ENCODE measurements at regions of chr5 and their contacts with region 1.

Region 1: DNA sequence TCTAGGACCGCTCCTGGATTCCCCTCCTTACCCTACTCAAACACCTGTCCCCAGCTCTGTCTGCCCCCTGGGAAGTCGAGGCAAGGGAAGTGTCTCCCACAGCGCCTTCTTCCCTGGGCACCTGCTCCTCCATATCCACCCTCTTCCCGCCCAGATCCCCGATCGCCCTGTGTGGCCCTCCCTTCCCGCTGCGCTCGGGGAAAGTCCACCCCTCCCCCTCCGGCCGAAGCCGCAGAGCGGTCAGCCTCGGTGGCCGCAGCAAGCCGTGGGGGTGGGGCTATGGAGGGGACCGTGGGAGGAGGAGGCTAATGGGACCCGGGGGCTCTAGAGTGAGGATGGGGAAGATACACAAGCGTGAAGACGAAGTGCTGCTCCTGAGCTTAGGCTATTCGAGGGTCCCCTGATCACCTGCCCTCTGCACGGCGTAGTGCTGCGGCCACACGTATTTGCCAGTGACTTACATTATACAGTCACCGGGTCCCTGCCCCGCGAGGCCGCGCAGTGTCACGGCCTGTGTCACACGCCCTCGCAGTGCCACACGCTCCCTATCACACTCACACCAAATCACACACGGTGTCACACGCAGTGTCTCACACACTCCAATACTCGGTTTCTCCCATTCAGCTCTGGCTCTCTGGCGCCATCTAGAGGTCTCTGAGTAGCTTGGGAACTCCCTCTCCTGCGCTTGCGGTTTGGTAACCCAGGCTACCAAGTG is 658 bp upstream of the PCDH1 start:
- DNase-seq: peak; percentile 78
- H3K27ac ChIP-seq: peak overlapping the region; percentile 67
- CTCF ChIP-seq: peak; percentile 99

Region 2: DNA sequence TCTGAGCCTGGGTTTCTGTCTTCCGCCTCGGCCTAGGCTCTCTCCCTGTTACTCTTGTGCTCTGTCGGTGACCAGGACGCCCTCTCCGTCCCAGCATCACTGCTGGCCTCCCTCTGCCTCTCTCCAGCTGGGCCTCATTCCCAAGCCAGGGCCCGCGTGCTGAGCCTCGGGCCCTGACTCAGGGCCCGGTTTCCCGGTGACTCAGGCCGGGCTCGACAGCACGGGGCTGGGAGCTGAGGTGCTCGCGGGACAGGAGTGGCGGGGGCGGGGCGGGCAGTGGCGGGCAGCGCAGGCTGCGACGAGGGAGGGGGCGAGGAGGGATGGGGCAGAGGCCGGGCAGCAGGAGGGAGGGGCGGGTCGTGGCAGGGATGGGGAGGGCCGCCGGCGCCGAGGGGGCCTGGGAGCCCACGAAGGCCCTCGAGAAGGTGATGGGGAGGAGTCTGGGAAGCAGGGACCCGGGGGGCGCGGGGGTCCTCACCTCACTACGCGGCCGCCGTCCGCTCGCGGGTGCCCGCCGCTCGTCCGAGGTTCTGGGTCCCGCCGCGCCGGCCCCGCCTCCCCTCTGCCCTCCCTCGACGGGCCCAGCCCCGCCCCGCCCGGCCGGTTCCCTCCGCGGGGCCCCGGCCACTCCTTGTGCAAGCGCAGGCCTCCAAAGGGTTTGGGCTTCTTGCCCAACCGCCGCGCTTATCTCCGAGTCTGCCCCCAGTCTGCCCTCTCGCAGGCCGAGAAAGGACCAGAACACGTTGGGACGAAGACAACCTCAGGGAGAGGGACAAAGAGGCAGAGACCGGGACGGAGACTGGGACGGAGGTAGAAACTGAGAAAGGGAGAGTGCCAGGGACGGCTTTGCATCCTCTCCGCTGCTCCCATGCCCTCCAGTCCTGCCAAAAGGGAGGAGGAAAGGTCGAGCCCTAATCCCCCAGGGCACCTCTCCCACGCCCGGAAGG is 196.9 kb before region 1 on chr5 and contains the start of gene ARAP3:
- CTCF ChIA-PET with region 1: interaction called, 14 read pairs
- POLR2A ChIA-PET with region 1: no interaction called
- DNase-seq: peak; percentile 95
- H3K27ac ChIP-seq: peak within 1 kb of the TSS; percentile 89
- CTCF ChIP-seq: no peak

Region 3: DNA sequence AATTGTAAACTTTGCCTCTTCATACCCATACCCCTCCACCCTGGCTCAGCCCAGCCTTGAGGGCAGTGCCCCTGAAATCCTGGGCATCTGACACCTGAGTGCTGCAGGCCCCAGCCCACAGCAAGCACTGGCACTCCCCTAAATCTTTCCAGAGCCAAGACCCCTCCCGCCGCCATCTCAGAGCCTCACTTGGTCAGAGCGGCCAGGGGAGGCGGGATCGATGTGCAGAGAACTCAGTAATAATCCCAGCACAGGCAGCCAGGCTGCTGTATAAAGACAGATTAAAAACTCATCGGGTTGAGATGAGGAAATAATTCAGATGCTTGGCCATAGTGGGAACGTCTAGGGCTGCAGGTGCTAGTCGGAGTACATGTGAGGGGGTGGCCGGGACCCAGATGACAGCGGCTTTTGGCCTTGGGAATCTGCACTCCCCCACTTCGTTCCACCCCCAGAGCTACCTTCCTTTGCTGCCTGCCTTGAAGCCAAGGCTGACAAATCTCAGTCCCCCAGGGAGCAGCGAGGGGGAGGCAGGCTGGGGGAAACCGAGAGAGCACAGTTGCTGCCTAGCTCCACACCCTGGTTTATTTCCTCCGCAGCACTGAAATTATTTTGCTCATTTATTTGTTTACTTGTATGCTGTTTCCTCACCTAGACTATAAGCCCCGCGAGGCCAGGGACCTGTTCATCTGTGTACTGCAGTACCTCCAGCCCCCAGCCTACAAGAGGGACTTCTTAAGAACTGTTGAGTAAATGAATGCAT is 177.3 kb before region 1 on chr5:
- CTCF ChIA-PET with region 1: interaction called, 157 read pairs
- POLR2A ChIA-PET with region 1: interaction called, 3 read pairs
- DNase-seq: no peak
- H3K27ac ChIP-seq: no peak overlapping the region
- CTCF ChIP-seq: no peak

Region 4: GRCh38 chr5:141757402-141757801 is 121.5 kb before region 1 on chr5:
- CTCF ChIA-PET with region 1: interaction called, 106 read pairs
- POLR2A ChIA-PET with region 1: interaction called, 3 read pairs
- DNase-seq: peak; percentile 88
- H3K27ac ChIP-seq: no peak overlapping the region
- CTCF ChIP-seq: no peak; the same call in 1 of the 2 replicates

Region 5: GRCh38 chr5:141811287-141812155 is 67.3 kb before region 1 on chr5:
- CTCF ChIA-PET with region 1: interaction called, 43 read pairs
- POLR2A ChIA-PET with region 1: interaction called, 4 read pairs
- DNase-seq: peak; percentile 76
- H3K27ac ChIP-seq: no peak overlapping the region
- CTCF ChIP-seq: peak; percentile 80

Region 6: DNA sequence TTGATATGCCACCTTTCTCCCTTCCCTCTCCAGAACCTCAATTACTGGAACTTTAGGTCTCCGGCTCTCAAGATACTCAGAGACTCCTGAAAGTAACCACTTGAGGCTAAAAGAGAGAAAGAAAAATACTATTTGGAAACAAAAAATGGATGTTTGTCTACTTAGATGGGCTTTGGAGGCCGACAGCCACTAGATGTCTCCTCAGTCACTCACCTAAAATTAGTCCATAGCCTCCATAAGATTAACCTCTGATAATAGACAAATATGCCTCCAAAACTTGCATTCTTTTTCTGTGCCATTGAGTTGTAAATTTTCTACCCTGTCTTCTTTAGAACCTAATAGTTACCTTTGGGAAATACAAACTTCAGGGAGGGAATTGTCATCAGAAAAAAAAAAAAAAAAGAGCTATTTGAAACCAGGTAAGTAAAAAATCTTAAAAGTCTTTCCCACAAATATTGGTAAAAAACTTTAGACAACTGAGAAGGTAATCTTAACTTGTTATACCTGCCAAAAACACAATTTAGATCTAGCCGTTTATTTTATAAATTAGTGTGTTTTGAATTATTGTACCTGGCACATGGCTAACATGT is 10.5 kb after region 1 on chr5:
- CTCF ChIA-PET with region 1: interaction called, 21 read pairs
- POLR2A ChIA-PET with region 1: no interaction called
- DNase-seq: no peak
- H3K27ac ChIP-seq: no peak overlapping the region
- CTCF ChIP-seq: peak; percentile 54

Measured in RWPE1 (cell line).